ENCODE measurements at regions of chr13 and their contacts with region 1.

Region 1: GRCh38 chr13:30739761-30740642 is 4.7 kb downstream of the ALOX5AP start:
- DNase-seq: peak; percentile 89
- ATAC-seq: peak; percentile 70
- H3K4me3 Mint-ChIP-seq: peak overlapping the region; percentile 67
- H3K27ac Mint-ChIP-seq: peak overlapping the region; percentile 87
- H3K4me1 Mint-ChIP-seq: peaks cover 75% of the 10 kb centered on the region
- H3K27me3 Mint-ChIP-seq: peaks cover 2% of the 10 kb centered on the region
- CTCF ChIP-seq: no peak

Region 2: DNA sequence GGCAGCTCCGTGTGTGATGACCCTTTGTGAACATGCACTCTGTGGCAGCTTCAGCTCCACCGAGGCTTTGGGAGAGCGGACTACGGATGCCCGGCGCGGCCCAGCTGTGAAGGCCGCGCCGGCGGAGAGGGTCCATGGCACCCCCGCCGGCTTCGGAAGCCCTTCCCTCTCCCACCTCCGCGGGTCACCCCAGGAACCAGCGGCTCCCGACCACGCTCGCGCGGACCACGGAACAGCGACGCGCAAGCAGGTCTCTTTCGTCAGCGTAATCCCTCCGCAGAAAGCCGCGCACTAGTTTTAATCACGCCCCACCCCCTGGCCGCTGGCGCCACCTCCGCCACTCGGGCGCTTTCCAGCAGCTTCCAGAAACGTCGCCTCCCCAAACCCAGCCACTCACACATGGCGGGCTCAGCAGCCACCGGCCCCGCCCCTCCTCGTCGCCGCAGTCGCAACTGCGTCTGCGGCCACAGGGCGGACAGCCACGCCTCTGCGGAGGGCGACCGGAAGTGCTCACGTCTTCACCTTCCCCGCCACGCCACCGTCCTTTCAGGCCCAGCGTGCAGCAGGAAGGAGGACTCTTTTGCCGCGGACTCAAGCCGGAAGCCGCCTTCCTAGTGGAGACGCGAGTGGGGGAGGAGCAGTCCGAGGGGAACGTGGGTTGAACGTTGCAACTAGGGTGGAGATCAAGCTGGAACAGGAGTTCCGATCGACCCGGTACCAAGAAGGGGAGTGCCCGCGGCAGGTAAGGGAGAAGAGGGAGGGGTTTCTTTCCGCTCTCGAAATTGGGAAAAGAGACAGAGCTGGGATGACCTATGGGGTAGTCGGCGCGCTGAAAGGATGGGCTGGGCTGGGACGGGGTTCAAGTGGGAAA is 122.5 kb before region 1 on chr13 and contains the start of gene USPL1:
- CTCF ChIA-PET with region 1: no interaction called
- POLR2A ChIA-PET with region 1: interaction called, 9 read pairs
- intact Hi-C with region 1: loop called (anchors 10 kb)
- DNase-seq: peak; percentile 98
- ATAC-seq: peak; percentile 90
- H3K4me3 Mint-ChIP-seq: no peak within 1 kb of the TSS
- H3K27ac Mint-ChIP-seq: no peak within 1 kb of the TSS
- H3K4me1 Mint-ChIP-seq: peaks cover 23% of the 10 kb centered on the region
- H3K27me3 Mint-ChIP-seq: no peaks in the 10 kb centered on the region
- CTCF ChIP-seq: no peak
- total RNA-seq, gene USPL1: 12.4 to 13.0 TPM

Region 3: GRCh38 chr13:30673669-30674521 is 66.1 kb before region 1 on chr13:
- CTCF ChIA-PET with region 1: interaction called, 3 read pairs
- POLR2A ChIA-PET with region 1: no interaction called
- intact Hi-C with region 1: loop called (anchors 5 kb)
- DNase-seq: peak; percentile 88
- ATAC-seq: peak; percentile 97
- H3K4me3 Mint-ChIP-seq: peak overlapping the region; percentile 76
- H3K27ac Mint-ChIP-seq: peak overlapping the region; percentile 75
- H3K4me1 Mint-ChIP-seq: peaks cover 11% of the 10 kb centered on the region
- H3K27me3 Mint-ChIP-seq: peaks cover 4% of the 10 kb centered on the region
- CTCF ChIP-seq: peak; percentile 59

Region 4: DNA sequence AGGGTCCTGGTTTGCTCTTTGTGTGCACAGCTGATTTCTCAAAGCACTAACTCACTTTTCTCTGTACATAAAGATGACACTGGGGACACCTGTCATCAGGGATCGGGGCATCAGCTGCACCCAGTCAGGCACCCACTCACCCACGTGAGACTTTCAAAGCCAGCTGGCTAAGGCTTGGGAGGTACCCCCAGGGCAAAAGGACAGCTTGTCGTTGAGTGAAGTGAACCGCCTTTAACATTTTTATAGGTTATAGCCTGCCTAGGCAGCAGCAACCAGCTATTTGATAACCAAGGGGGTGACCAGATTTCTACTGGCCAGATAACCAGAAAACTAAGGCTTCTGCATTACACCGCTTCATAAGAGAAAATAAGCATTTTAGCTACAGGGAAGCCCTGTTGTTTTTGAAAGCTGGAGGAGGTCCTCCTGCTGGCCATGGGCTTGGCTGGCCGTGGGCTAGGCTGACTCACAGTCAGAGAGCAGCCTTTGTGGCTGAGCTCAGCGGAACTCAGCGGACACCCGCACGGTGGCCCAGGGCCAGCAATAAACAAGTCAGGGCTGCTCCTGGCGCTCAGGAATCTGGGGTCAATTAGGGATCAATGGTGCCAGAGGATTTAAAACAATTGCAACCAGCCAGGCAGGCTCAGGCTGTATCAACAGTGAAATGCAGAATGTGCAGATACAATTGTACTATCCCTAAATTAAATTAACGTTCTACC is 52.4 kb after region 1 on chr13:
- CTCF ChIA-PET with region 1: interaction called, 4 read pairs
- POLR2A ChIA-PET with region 1: interaction called, 3 read pairs
- intact Hi-C with region 1: loop called (anchors 5 kb)
- DNase-seq: no peak
- ATAC-seq: no peak
- H3K4me3 Mint-ChIP-seq: no peak overlapping the region
- H3K27ac Mint-ChIP-seq: no peak overlapping the region
- H3K4me1 Mint-ChIP-seq: peaks cover 34% of the 10 kb centered on the region
- H3K27me3 Mint-ChIP-seq: no peaks in the 10 kb centered on the region
- CTCF ChIP-seq: no peak

Region 5: DNA sequence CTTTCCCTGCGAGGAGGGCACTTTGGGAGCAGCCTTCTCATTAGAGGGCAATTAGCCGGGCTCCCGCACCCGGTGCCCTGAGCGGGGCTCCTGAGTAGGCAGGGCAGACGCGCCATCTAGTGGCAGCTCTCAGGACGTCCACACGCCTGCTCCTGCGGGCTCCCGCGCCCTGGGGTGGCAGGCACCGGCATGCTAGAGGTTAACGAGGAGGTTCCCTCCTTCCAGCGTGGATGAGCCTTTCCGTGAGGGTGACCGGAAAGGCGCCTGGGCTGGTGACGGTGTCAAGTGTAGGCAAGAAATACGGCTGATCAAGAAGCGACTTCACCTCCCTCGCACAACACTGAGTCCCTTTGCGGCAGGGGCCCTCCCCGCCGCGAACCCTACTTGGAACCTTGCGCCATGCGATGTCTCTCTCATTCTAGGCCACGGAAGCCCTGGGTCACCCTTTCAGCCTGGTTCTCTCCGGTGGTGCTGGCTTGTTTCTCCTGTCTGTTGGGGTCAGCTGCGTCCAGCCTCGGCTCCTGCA is 63.0 kb after region 1 on chr13:
- CTCF ChIA-PET with region 1: no interaction called
- POLR2A ChIA-PET with region 1: interaction called, 3 read pairs
- intact Hi-C with region 1: loop called (anchors 5 kb)
- DNase-seq: peak; percentile 88
- ATAC-seq: peak; percentile 99
- H3K4me3 Mint-ChIP-seq: peak overlapping the region; percentile 43
- H3K27ac Mint-ChIP-seq: no peak overlapping the region
- H3K4me1 Mint-ChIP-seq: peaks cover 9% of the 10 kb centered on the region
- H3K27me3 Mint-ChIP-seq: no peaks in the 10 kb centered on the region
- CTCF ChIP-seq: peak; percentile 98

Region 6: DNA sequence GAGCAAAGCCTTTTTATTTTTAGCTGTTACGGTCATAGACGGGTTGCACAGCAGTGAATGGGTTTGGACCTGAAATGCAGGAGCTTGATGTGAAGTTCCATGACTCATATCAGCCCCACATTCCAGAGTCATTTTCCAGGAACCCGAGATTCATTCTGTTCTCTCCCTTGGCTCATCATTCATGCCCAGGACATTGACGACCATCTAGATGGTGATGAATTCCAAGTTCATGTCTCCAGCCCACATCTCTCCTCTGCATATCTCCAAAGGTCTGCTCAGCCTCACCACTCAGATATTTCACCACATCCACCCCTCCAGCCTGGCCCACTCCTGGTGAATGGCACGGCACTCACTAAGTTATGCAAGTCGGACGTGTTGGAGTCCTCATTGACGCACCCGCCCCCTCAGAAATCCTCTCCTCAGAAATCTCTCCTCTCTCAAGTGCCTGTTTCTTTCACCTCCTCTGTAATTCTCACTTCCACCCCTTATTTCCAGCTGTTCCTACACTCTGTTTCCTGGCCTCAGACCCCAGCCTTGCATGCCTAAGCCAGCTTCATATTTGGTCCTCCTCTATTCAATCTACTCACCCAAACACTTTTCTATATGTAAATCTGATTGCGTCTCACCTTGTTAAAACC is 78.4 kb after region 1 on chr13:
- CTCF ChIA-PET with region 1: no interaction called
- POLR2A ChIA-PET with region 1: no interaction called
- intact Hi-C with region 1: no loop called
- DNase-seq: no peak
- ATAC-seq: no peak
- H3K4me3 Mint-ChIP-seq: no peak overlapping the region
- H3K27ac Mint-ChIP-seq: no peak overlapping the region
- H3K4me1 Mint-ChIP-seq: peaks cover 3% of the 10 kb centered on the region
- H3K27me3 Mint-ChIP-seq: peaks cover 4% of the 10 kb centered on the region
- CTCF ChIP-seq: no peak